AG04450 (cell line): ENCODE measurements at regions of chr11 and their contacts with region 1.

Region 1: GRCh38 chr11:64778508-64779346 is at the start of gene SF1:
- DNase-seq: peak; percentile 99
- H3K4me3 ChIP-seq: peak within 1 kb of the TSS; percentile 98
- H3K27ac ChIP-seq: peak within 1 kb of the TSS; percentile 85
- H3K27me3 ChIP-seq: no peaks in the 10 kb centered on the region
- CTCF ChIP-seq: no peak
- polyA plus RNA-seq, gene SF1: 55.9 and 56.8 TPM in 2 replicates

Region 2: GRCh38 chr11:64759561-64760349 is 19.0 kb before region 1 on chr11 and contains the start of gene PYGM:
- CTCF ChIA-PET with region 1: interaction called, 4 read pairs
- POLR2A ChIA-PET with region 1: interaction called, 11 read pairs
- DNase-seq: no peak
- H3K4me3 ChIP-seq: no peak within 1 kb of the TSS
- H3K27ac ChIP-seq: peak within 1 kb of the TSS; percentile 21
- H3K27me3 ChIP-seq: no peaks in the 10 kb centered on the region
- CTCF ChIP-seq: no peak
- polyA plus RNA-seq, gene PYGM: 0.14 and 0.20 TPM in 2 replicates

Region 3: GRCh38 chr11:64767344-64768299 is 11.1 kb before region 1 on chr11:
- CTCF ChIA-PET with region 1: interaction called, 11 read pairs
- POLR2A ChIA-PET with region 1: interaction called, 6 read pairs
- DNase-seq: no peak
- H3K4me3 ChIP-seq: no peak overlapping the region
- H3K27ac ChIP-seq: no peak overlapping the region
- H3K27me3 ChIP-seq: no peaks in the 10 kb centered on the region
- CTCF ChIP-seq: peak; percentile 64